ENCODE measurements at regions of chr6 and their contacts with region 1.

Region 1: GRCh38 chr6:90478789-90479602 is 107.9 kb downstream of the MAP3K7 start:
- DNase-seq: peak; percentile 91
- H3K4me3 ChIP-seq: no peak overlapping the region
- H3K27ac ChIP-seq: no peak overlapping the region
- H3K4me1 ChIP-seq: no peaks in the 10 kb centered on the region
- H3K27me3 ChIP-seq: no peaks in the 10 kb centered on the region
- CTCF ChIP-seq: peak; percentile 85 to 93 (median 92)
- POLR2A ChIP-seq: no peak

Region 2: DNA sequence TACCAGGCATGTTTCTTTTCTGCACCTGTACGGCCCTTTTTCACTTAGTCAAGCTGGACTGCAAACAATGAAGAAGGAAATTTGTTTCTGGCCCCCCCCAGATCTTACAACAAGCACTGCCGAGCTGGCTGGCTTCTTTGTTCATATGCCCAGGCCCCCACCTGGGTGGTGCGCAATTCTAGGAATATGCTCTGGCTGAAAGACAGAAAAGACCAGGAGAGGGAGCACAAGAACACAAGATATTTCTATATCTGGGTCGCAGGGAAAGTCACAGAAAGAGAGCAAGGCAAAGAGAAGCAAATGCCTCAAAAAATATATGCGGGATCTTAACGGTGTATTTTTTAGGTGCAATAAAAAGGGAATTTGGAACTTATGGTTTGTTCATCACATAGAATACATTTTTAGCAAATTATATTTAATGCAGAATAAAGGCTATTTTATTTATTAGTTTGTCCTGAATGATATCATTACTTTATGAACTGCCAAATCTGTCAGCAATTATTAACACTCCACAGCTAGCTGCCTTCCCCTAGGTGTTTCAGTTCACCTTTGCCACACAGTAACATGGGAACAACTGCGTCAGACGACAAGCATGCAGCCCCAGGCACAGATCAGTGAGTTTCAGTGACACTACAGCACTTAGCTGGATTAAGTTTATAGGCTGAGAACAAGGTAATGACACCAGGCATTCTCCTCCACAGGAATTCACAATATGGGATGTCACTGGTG is 508.2 kb before region 1 on chr6:
- intact Hi-C with region 1: loop called (anchors 2 kb)
- DNase-seq: peak; percentile 40
- H3K4me3 ChIP-seq: no peak overlapping the region
- H3K27ac ChIP-seq: no peak overlapping the region
- H3K4me1 ChIP-seq: no peaks in the 10 kb centered on the region
- H3K27me3 ChIP-seq: no peaks in the 10 kb centered on the region
- CTCF ChIP-seq: peak in 3 of 4 experiments; percentile 48 to 75 (median 73)
- POLR2A ChIP-seq: no peak

Region 3: DNA sequence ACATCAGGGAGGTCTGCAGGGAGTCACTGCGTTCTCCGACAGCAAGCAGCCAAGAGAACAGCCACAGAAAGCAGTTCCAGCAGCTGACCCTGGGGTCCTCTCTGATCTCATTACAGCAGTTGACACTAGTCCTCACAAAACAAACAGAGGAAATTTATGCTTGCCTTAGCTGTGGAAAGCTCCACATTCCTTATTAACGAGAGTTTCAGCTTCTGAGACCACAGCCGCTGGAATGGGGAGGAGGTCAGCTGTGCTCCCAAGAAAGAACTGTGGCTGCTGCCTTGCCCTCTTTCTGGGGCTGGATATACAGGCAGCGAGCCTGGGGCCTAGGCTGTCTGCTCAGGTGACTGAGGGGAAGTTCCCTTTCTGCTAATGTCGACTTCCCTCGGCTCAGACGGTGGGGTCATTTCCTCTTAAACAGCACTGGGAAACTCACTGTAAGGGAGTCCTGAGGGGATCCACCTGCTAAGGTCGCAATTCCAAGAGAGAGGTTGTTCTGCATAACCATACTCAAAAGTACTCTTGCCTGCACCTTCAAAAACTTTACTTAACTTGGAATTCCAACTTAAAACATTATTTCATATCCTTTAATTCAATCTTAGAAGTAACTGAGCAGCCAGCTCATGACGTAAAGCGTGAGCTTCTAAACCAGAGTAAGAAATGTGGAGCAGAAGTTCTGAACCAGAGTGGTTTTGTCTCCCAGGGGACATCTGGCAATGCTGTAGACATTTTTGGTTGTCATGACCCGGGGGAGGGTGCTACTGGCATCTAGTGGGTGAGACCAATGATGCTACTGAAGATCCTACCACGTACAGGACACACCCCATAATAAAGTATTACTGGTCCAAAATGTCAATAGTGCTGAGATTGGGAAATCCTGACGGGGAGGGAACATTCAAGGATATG is 262.7 kb before region 1 on chr6:
- intact Hi-C with region 1: loop called (anchors 10 kb)
- DNase-seq: no peak
- H3K4me3 ChIP-seq: no peak overlapping the region
- H3K27ac ChIP-seq: peak overlapping the region; percentile 61 to 94
- H3K4me1 ChIP-seq: peaks cover 19% of the 10 kb centered on the region
- H3K27me3 ChIP-seq: no peaks in the 10 kb centered on the region
- CTCF ChIP-seq: no peak
- POLR2A ChIP-seq: no peak

Region 4: GRCh38 chr6:90369024-90369519 is 109.9 kb before region 1 on chr6:
- intact Hi-C with region 1: loop called (anchors 10 kb)
- DNase-seq: peak; percentile 91
- H3K4me3 ChIP-seq: no peak overlapping the region
- H3K27ac ChIP-seq: peak overlapping the region; percentile 74 to 76
- H3K4me1 ChIP-seq: no peaks in the 10 kb centered on the region
- H3K27me3 ChIP-seq: no peaks in the 10 kb centered on the region
- CTCF ChIP-seq: no peak
- POLR2A ChIP-seq: no peak